Panc1 (cell line): ENCODE measurements at regions of chr3 and their contacts with region 1.

Region 1: GRCh38 chr3:8970971-8971589 is 7.8 kb upstream of the RAD18 start:
- DNase-seq: peak; percentile 47
- ATAC-seq: peak; percentile 77
- H3K4me3 ChIP-seq: no peak overlapping the region
- H3K27ac ChIP-seq: no peak overlapping the region
- H3K4me1 ChIP-seq: no peaks in the 10 kb centered on the region
- H3K27me3 ChIP-seq: no peaks in the 10 kb centered on the region
- CTCF ChIP-seq: peak; percentile 93

Region 2: DNA sequence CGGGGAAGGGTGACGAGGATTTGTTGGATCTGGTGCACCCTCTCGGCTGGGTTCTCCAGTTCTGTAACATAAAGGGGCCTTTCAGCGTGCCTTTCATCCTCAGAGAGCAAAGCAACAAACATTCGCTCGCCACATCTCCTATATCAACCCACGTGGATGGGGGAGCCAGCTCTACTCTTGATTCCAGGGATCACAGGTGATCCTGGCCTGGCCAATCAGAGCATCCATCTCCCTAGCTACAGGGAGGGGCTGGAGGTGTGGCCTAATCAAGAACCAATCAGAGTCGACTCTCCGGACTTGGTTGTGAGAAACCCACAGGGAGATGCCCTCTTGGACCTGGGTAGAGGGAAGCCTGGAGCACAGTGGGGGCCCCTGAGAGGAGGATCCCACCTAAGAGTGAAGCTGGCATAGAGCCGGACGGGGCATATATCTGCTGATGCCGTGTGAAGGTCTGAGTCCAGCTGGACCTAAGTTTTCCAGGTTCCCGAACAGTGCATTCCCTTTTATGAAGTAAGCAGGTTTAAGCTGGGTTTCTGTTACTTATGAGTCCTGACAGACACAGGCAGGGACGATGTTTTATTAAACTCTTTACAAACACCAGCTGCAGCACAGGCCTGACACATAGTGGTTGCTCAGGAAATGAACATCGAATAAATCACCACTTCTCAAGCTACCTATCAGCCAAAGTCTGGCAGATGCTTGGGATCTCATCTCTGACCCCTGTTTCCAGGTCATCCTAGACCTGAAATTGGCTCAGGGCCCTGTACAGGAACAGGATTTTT is 42.9 kb after region 1 on chr3:
- CTCF ChIA-PET with region 1: no interaction called
- POLR2A ChIA-PET with region 1: no interaction called
- in situ Hi-C with region 1: no loop called
- intact Hi-C with region 1: no loop called
- DNase-seq: no peak
- ATAC-seq: no peak
- H3K4me3 ChIP-seq: no peak overlapping the region
- H3K27ac ChIP-seq: no peak overlapping the region
- H3K4me1 ChIP-seq: no peaks in the 10 kb centered on the region
- H3K27me3 ChIP-seq: 0 out of 2 replicates have a peak, but pooled peaks cover 2% of the 10 kb centered on the region
- CTCF ChIP-seq: no peak

Region 3: GRCh38 chr3:9067352-9067975 is 96.4 kb after region 1 on chr3:
- CTCF ChIA-PET with region 1: no interaction called
- POLR2A ChIA-PET with region 1: no interaction called
- in situ Hi-C with region 1: no loop called
- intact Hi-C with region 1: loop called (anchors 5 kb)
- DNase-seq: peak; percentile 45
- ATAC-seq: peak; percentile 86
- H3K4me3 ChIP-seq: no peak overlapping the region
- H3K27ac ChIP-seq: no peak overlapping the region
- H3K4me1 ChIP-seq: no peaks in the 10 kb centered on the region
- H3K27me3 ChIP-seq: no peaks in the 10 kb centered on the region; the same call in 1 of the 2 replicates
- CTCF ChIP-seq: peak; percentile 95

Region 4: GRCh38 chr3:9302425-9303181 is 331.5 kb after region 1 on chr3:
- CTCF ChIA-PET with region 1: interaction called, 6 read pairs
- POLR2A ChIA-PET with region 1: no interaction called
- in situ Hi-C with region 1: no loop called
- intact Hi-C with region 1: loop called (anchors 2 kb)
- DNase-seq: peak; percentile 18
- ATAC-seq: peak; percentile 98
- H3K4me3 ChIP-seq: no peak overlapping the region
- H3K27ac ChIP-seq: no peak overlapping the region
- H3K4me1 ChIP-seq: no peaks in the 10 kb centered on the region
- H3K27me3 ChIP-seq: no peaks in the 10 kb centered on the region
- CTCF ChIP-seq: peak; percentile 88